Activated CD4-positive, alpha-beta T cell treated with anti-CD3 and anti-CD28 coated beads, Interleukin-2, amount 10 ng/mL, durations not matched to agents 7 days and 5 days (primary cell): ENCODE measurements at regions of chr12 and their contacts with region 1.

Region 1: GRCh38 chr12:47802324-47802735 is 17.4 kb downstream of the HDAC7 start:
- DNase-seq: peak; percentile 30
- H3K4me3 Mint-ChIP-seq: peak overlapping the region; percentile 52
- H3K27ac Mint-ChIP-seq: peak overlapping the region; percentile 93
- H3K4me1 Mint-ChIP-seq: peaks cover 90% of the 10 kb centered on the region
- H3K27me3 Mint-ChIP-seq: no peaks in the 10 kb centered on the region

Region 2: DNA sequence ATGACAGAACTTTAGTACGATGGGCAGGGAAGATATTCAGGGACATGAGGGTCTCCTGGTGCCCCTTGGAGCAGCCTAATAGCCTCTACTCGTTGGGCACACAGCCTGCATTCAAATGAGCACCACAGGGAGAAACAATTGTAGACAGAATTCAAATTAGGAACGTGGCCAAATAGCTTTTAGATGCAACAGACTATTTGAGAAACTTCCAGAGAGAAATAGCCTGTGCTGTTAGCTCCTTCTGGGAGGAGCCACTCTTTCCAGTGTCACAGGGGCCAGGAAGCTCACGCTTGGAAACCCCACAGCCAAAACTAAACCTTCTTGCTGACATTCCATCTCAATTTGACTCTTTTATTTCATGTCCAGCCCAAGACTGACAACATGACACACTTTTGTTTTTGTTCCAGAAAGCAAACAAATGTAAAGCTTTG is 211.0 kb before region 1 on chr12:
- CTCF ChIA-PET with region 1: no interaction called
- POLR2A ChIA-PET with region 1: no interaction called
- DNase-seq: no peak
- H3K4me3 Mint-ChIP-seq: no peak overlapping the region
- H3K27ac Mint-ChIP-seq: no peak overlapping the region
- H3K4me1 Mint-ChIP-seq: no peaks in the 10 kb centered on the region
- H3K27me3 Mint-ChIP-seq: no peaks in the 10 kb centered on the region

Region 3: DNA sequence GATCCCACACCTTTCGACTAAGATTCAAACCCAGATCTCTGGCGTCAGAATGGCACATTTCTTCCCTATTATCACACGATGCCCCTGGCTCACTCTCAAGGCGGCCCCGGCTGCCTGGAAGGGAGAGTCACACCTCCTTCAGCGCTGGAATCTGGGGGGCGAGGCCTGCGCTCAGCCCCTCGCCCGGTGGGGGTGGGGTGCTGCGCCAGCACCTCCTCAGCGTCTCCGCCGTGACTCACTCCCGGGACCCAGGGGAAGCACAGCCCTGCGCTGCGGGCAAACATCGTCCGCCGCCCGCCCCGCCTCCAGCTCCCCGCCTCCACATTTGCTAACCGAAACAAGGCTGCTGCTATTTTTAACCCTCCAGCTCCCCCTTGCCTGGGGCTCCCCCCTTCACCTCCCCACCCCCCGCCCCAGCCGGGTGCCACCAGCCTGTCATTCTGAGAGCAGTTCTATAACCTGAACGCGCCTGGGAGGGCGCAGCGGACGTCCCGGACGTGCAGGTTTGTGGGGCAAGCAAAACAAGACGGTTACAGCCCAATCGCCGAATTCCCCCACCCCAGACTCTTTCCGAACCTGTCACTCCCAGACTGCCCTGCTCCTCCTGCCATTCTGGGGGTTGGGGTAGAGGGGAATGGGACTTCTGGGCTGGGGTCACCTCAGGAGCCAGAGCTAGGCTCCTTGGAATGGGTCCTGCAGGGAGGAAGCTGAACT is 10.6 kb after region 1 on chr12:
- CTCF ChIA-PET with region 1: interaction called, 18 read pairs
- POLR2A ChIA-PET with region 1: interaction called, 4 read pairs
- DNase-seq: peak; percentile 95
- H3K4me3 Mint-ChIP-seq: peak overlapping the region; percentile 94
- H3K27ac Mint-ChIP-seq: peak overlapping the region; percentile 97
- H3K4me1 Mint-ChIP-seq: peaks cover 94% of the 10 kb centered on the region
- H3K27me3 Mint-ChIP-seq: no peaks in the 10 kb centered on the region

Region 4: GRCh38 chr12:47819896-47820630 is 17.7 kb after region 1 on chr12 and contains the start of gene HDAC7:
- CTCF ChIA-PET with region 1: interaction called, 23 read pairs
- POLR2A ChIA-PET with region 1: interaction called, 3 read pairs
- DNase-seq: peak; percentile 81
- H3K4me3 Mint-ChIP-seq: peak within 1 kb of the TSS; percentile 94
- H3K27ac Mint-ChIP-seq: peak within 1 kb of the TSS; percentile 97
- H3K4me1 Mint-ChIP-seq: peaks cover 79% of the 10 kb centered on the region
- H3K27me3 Mint-ChIP-seq: no peaks in the 10 kb centered on the region
- total RNA-seq, gene HDAC7: 218 to 232 TPM

Region 5: DNA sequence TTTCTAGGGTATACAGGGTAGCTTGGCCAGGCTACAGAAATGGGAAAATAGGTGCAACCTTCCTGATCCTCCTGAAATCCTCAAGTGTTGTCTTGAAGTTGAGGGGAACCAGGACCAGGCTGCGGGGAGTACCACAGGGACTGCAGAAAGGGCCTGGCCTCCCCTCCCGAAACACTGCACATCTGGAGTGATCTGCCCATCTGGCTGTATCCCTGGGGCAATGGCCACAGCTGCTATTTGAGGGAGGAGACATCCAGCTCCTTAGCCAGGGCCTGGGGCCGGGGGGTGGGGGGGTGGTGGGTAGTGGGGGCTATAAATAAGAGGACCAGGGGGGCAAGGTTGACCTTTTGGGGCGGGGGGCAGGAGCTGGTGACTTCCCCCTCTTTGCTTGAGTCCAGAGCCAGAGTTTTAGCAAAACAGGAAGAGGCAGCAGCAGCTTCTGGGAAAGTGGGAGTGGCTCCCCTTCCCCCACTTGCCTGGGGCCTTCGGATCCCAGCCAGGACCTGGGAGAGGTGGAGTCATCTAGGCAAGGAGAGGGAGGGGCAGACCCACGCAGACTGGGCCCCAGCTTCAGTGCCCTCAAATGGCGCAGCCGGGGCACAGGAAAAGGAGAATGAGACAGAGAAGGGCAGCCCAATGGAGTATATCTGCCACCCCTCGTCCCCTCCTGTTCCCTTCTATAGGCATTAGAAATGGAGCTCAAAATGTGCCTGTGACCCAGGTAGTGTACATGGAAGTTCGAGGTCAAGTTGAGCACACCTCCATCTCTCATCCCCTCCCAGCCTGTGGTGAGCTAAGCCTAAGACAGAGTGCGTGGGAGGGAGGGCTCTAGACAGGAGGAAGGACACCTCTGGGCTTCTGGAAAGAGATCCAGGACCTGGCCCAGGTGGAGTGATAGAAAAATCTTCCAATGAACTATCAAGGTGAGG is 26.5 kb after region 1 on chr12:
- CTCF ChIA-PET with region 1: interaction called, 309 read pairs
- POLR2A ChIA-PET with region 1: interaction called, 8 read pairs
- DNase-seq: no peak
- H3K4me3 Mint-ChIP-seq: peak overlapping the region; percentile 28
- H3K27ac Mint-ChIP-seq: peak overlapping the region; percentile 77
- H3K4me1 Mint-ChIP-seq: peaks cover 92% of the 10 kb centered on the region
- H3K27me3 Mint-ChIP-seq: no peaks in the 10 kb centered on the region

Region 6: DNA sequence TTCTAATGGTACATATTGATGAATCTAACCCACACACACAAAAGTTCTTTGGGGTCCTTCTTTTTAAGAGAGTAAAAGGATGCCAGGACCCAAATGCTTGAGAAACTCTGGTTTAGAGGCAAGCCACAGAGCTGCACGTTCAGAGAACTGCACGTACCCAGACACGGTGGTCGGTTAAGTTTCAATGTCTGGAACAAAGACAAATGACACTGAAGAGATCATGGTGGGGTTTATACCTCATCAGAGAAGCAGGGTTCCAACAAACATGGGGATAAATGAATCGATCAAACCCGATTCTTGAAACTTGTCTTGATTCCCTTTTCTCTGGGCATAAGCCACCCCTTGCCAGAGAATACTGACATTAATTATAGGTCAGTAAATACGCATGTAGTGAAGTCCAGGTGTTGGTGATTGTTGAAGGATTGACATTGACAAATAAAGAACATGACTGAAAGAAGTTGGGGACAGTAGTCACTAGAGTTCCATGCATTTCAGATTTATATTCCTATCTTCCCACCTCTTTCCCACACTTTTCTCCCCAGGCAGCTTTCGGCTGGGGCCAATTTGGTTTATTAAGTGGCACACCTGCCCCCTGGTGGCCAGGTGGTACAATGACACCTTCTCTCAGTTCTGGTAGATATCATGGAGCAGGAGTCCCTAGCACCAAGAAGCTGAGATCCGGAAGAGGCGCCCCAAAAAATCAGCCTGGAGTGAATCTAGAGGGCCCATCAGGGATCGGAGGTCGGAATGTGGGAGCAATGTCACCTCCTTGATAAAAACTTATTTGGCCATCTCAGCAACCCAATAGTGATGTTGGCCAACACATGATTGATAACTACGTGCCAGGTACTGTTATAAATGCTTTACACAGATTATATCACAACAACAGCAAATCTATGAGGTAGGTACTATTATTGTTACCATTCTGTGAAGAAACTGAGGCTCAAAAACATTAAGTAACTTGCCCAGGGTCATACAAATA is 35.2 kb after region 1 on chr12:
- CTCF ChIA-PET with region 1: interaction called, 309 read pairs
- POLR2A ChIA-PET with region 1: interaction called, 8 read pairs
- DNase-seq: peak; percentile 70
- H3K4me3 Mint-ChIP-seq: no peak overlapping the region
- H3K27ac Mint-ChIP-seq: peak overlapping the region; percentile 11
- H3K4me1 Mint-ChIP-seq: peaks cover 57% of the 10 kb centered on the region
- H3K27me3 Mint-ChIP-seq: no peaks in the 10 kb centered on the region